Activated B cell treated with CpG ODN at 0.5 μM for 24 hours (primary cell): ENCODE measurements at regions of chr17 and their contacts with region 1.

Region 1: GRCh38 chr17:75199886-75200618 is 5.4 kb upstream of the NUP85 start:
- DNase-seq: no peak
- ATAC-seq: no peak
- H3K4me3 Mint-ChIP-seq: no peak overlapping the region
- H3K27ac Mint-ChIP-seq: no peak overlapping the region
- H3K4me1 Mint-ChIP-seq: peaks cover 6% of the 10 kb centered on the region
- H3K27me3 Mint-ChIP-seq: no peaks in the 10 kb centered on the region
- CTCF ChIP-seq: no peak

Region 2: GRCh38 chr17:75059369-75060345 is 140.4 kb before region 1 on chr17:
- CTCF ChIA-PET with region 1: interaction called, 25 read pairs
- POLR2A ChIA-PET with region 1: no interaction called
- intact Hi-C with region 1: no loop called
- DNase-seq: no peak
- ATAC-seq: no peak
- H3K4me3 Mint-ChIP-seq: no peak overlapping the region
- H3K27ac Mint-ChIP-seq: no peak overlapping the region
- H3K4me1 Mint-ChIP-seq: no peaks in the 10 kb centered on the region
- H3K27me3 Mint-ChIP-seq: no peaks in the 10 kb centered on the region
- CTCF ChIP-seq: no peak

Region 3: DNA sequence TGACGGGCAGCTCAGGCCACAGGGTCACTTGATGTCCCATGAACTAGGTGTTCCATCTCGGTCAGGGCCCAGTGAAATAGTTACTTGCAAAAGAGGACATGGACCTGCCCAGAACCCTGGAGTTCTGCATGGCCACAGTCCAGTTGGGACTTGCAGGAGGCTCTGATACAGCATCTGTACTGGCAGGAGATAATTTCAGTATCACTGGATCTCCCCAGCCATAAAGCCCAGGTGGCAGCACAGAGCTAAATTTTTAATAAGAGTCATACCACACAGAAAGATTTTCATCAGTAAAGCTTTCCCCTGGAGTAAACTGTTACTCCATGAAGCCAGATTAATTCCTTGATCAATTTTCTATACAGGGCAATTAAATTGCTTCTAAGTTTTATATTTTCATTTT is 130.3 kb before region 1 on chr17:
- CTCF ChIA-PET with region 1: interaction called, 9 read pairs
- POLR2A ChIA-PET with region 1: no interaction called
- intact Hi-C with region 1: loop called (anchors 5 kb)
- DNase-seq: no peak
- ATAC-seq: no peak
- H3K4me3 Mint-ChIP-seq: no peak overlapping the region
- H3K27ac Mint-ChIP-seq: no peak overlapping the region
- H3K4me1 Mint-ChIP-seq: no peaks in the 10 kb centered on the region
- H3K27me3 Mint-ChIP-seq: no peaks in the 10 kb centered on the region
- CTCF ChIP-seq: no peak